HepG2 (cell line): ENCODE measurements at regions of chr10 and their contacts with region 1.

Region 1: GRCh38 chr10:95430231-95430951 is 130.8 kb downstream of the SORBS1 start:
- DNase-seq: peak; percentile 65
- ATAC-seq: peak; percentile 94
- H3K4me3 ChIP-seq: no peak overlapping the region
- H3K27ac ChIP-seq: no peak overlapping the region
- H3K4me1 ChIP-seq: peaks cover 17% of the 10 kb centered on the region
- H3K27me3 ChIP-seq: no peaks in the 10 kb centered on the region
- CTCF ChIP-seq: peak; percentile 93
- EP300 ChIP-seq: no peak
- POLR2A ChIP-seq: no peak
- RAD21 ChIP-seq: peak; percentile 95

Region 2: DNA sequence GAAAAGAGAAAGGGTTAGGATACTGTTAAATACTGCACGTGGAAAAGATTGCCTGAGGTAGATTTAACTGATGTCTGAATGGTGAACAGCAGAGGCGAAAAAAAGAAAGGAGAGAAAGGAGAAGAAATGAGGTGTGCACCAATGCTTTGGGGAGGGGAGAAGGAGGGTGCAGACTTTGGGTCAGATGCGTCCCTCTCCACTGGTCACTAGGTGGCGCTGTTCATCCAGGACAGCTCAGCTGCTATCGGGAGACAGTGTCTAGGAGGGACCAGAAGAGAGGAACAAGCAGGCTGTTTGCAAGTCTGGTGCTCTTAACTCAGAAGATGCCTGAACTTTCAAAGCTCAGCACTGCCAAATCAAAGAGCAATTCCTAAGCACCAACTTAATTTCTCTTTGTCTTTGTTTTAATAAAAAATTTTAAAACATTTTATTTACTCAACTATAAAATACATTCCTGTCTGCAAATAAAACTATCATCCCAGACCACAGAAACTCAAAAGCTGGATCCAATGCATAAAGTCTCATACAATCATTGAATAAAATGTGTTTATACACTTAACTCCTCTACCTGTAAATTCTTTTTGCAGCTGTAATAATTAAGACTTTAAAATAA is 55.7 kb before region 1 on chr10:
- CTCF ChIA-PET with region 1: interaction called, 4 read pairs
- POLR2A ChIA-PET with region 1: no interaction called
- in situ Hi-C with region 1: no loop called
- intact Hi-C with region 1: loop called (anchors 10 kb)
- DNase-seq: peak; percentile 79
- ATAC-seq: peak; percentile 99
- H3K4me3 ChIP-seq: no peak overlapping the region
- H3K27ac ChIP-seq: no peak overlapping the region
- H3K4me1 ChIP-seq: no peaks in the 10 kb centered on the region
- H3K27me3 ChIP-seq: no peaks in the 10 kb centered on the region
- CTCF ChIP-seq: peak; percentile 96
- EP300 ChIP-seq: no peak
- POLR2A ChIP-seq: no peak
- RAD21 ChIP-seq: peak; percentile 82

Region 3: GRCh38 chr10:95445837-95446486 is 15.6 kb after region 1 on chr10:
- CTCF ChIA-PET with region 1: no interaction called
- POLR2A ChIA-PET with region 1: no interaction called
- in situ Hi-C with region 1: no loop called
- intact Hi-C with region 1: loop called (anchors 1 kb)
- DNase-seq: peak; percentile 60
- ATAC-seq: peak; percentile 82
- H3K4me3 ChIP-seq: no peak overlapping the region
- H3K27ac ChIP-seq: peak overlapping the region; percentile 11
- H3K4me1 ChIP-seq: peaks cover 98% of the 10 kb centered on the region
- H3K27me3 ChIP-seq: no peaks in the 10 kb centered on the region
- CTCF ChIP-seq: peak; percentile 79
- EP300 ChIP-seq: no peak
- POLR2A ChIP-seq: no peak
- RAD21 ChIP-seq: peak; percentile 57

Region 4: GRCh38 chr10:95467162-95467599 is 36.8 kb after region 1 on chr10:
- CTCF ChIA-PET with region 1: no interaction called
- POLR2A ChIA-PET with region 1: no interaction called
- in situ Hi-C with region 1: no loop called
- intact Hi-C with region 1: no loop called
- DNase-seq: peak; percentile 83
- ATAC-seq: peak; percentile 99
- H3K4me3 ChIP-seq: no peak overlapping the region
- H3K27ac ChIP-seq: peak overlapping the region; percentile 65
- H3K4me1 ChIP-seq: peaks cover 92% of the 10 kb centered on the region
- H3K27me3 ChIP-seq: no peaks in the 10 kb centered on the region
- CTCF ChIP-seq: peak; percentile 82
- EP300 ChIP-seq: peak in 1 of 2 experiments; percentile 88; a peak in 2 of 4 replicates
- POLR2A ChIP-seq: no peak
- RAD21 ChIP-seq: peak; percentile 84

Region 5: DNA sequence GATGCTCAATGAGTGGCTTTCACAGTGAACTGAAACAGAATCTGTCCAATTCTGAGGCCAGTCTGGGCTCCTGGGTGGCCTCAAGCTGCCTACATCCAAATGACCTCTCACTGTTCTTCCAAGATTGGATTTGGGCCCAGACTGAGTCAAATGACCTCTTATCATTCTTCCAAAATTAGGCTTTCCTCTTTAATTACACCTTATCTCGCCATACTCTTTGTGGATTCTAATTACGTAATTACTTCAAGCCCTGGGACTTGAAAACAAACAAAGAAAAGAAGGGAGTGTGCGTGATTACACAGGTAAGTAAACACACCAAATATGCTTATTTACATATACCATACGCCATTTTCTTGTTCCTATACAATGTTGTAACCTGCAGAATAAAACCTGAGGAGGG is 111.9 kb after region 1 on chr10:
- CTCF ChIA-PET with region 1: no interaction called
- POLR2A ChIA-PET with region 1: no interaction called
- in situ Hi-C with region 1: no loop called
- intact Hi-C with region 1: no loop called
- DNase-seq: no peak
- ATAC-seq: no peak
- H3K4me3 ChIP-seq: no peak overlapping the region
- H3K27ac ChIP-seq: peak overlapping the region; percentile 21
- H3K4me1 ChIP-seq: peaks cover 100% of the 10 kb centered on the region
- H3K27me3 ChIP-seq: no peaks in the 10 kb centered on the region
- CTCF ChIP-seq: no peak
- EP300 ChIP-seq: 0 out of 4 replicates have a peak, but pooled peaks of 1 of the 2 experiments have one; percentile 32
- POLR2A ChIP-seq: no peak
- RAD21 ChIP-seq: no peak